Caco-2 (cell line): ENCODE measurements at regions of chr16 and their contacts with region 1.

Region 1: GRCh38 chr16:78249068-78249467 is 149.6 kb downstream of the WWOX start:
- DNase-seq: peak; percentile 68 to 82
- H3K4me3 ChIP-seq: no peak overlapping the region
- H3K4me3 Mint-ChIP-seq: peak overlapping the region; percentile 3
- H3K27ac Mint-ChIP-seq: peak overlapping the region; percentile 83
- H3K4me1 ChIP-seq: peaks cover 62% of the 10 kb centered on the region
- H3K4me1 Mint-ChIP-seq: peaks cover 73% of the 10 kb centered on the region
- H3K27me3 ChIP-seq: no peaks in the 10 kb centered on the region
- H3K27me3 Mint-ChIP-seq: no peaks in the 10 kb centered on the region
- CTCF ChIP-seq: peak; percentile 9 to 51

Region 2: DNA sequence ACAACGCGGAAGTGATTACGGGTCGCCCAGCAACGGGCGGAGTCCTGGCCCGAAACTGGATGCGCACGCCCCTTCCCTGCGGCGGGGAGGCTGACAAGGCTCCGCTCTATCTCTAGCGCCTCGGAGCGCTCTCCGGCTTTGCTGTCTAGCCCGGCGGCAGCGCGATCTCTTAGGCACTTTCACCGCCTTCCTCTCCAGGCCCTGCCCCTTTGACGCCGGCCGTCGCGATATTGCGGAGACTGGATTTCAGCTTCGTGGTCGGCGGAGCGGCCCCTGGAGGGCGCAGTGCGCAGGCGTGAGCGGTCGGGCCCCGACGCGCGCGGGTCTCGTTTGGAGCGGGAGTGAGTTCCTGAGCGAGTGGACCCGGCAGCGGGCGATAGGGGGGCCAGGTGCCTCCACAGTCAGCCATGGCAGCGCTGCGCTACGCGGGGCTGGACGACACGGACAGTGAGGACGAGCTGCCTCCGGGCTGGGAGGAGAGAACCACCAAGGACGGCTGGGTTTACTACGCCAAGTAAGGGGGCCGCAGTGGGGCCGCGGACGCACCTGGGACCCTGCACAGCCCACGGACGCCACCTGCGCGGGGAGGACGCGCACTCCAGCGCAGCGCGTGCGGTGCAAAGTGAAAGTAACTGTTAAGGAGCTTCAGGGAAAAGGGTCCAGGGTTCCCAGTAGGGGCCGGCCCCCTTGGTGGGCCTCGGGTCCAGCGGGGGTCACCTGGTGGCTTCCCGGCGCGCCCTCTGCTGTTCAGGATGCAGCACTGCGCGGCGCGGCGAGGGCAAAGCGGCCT is 149.5 kb before region 1 on chr16 and contains the start of gene WWOX:
- CTCF ChIA-PET with region 1: no interaction called
- POLR2A ChIA-PET with region 1: no interaction called
- intact Hi-C with region 1: no loop called
- DNase-seq: peak; percentile 98
- H3K4me3 ChIP-seq: peak within 1 kb of the TSS; percentile 97
- H3K4me3 Mint-ChIP-seq: peak within 1 kb of the TSS; percentile 90
- H3K27ac Mint-ChIP-seq: peak within 1 kb of the TSS; percentile 91
- H3K4me1 ChIP-seq: no peaks in the 10 kb centered on the region
- H3K4me1 Mint-ChIP-seq: peaks cover 14% of the 10 kb centered on the region
- H3K27me3 ChIP-seq: no peaks in the 10 kb centered on the region
- H3K27me3 Mint-ChIP-seq: peaks cover 1% of the 10 kb centered on the region
- CTCF ChIP-seq: peak; percentile 97
- total RNA-seq, gene WWOX: 45.0 and 47.8 TPM in 2 replicates

Region 3: DNA sequence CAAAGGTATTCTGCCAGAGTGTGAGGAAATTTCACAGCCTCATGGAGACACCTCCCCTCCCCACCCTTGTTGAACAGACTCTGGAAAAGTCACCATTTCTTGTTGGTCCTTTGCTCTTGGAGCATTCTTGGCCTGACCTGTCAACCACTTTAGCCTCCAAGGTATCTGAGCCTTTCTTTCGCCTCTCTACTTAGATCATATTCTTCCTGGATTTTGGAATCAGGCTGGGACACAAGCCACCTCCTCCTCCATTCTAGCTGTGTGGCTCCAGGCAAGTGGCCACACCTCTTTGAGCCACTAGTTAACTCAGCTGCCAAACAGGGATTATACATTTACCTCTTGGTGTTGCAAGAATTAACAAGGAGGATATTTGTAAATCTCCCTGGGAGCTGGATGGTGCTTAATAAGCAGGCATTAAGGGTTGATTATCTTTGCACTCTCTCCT is 43.9 kb after region 1 on chr16:
- CTCF ChIA-PET with region 1: no interaction called
- POLR2A ChIA-PET with region 1: interaction called, 3 read pairs
- intact Hi-C with region 1: loop called (anchors 1 kb)
- DNase-seq: peak; percentile 49 to 58
- H3K4me3 ChIP-seq: no peak overlapping the region
- H3K4me3 Mint-ChIP-seq: peak overlapping the region; percentile 5
- H3K27ac Mint-ChIP-seq: peak overlapping the region; percentile 48
- H3K4me1 ChIP-seq: peaks cover 31% of the 10 kb centered on the region
- H3K4me1 Mint-ChIP-seq: peaks cover 36% of the 10 kb centered on the region
- H3K27me3 ChIP-seq: no peaks in the 10 kb centered on the region
- H3K27me3 Mint-ChIP-seq: no peaks in the 10 kb centered on the region
- CTCF ChIP-seq: no peak